ENCODE measurements at regions of chr13 and their contacts with region 1.

Region 1: DNA sequence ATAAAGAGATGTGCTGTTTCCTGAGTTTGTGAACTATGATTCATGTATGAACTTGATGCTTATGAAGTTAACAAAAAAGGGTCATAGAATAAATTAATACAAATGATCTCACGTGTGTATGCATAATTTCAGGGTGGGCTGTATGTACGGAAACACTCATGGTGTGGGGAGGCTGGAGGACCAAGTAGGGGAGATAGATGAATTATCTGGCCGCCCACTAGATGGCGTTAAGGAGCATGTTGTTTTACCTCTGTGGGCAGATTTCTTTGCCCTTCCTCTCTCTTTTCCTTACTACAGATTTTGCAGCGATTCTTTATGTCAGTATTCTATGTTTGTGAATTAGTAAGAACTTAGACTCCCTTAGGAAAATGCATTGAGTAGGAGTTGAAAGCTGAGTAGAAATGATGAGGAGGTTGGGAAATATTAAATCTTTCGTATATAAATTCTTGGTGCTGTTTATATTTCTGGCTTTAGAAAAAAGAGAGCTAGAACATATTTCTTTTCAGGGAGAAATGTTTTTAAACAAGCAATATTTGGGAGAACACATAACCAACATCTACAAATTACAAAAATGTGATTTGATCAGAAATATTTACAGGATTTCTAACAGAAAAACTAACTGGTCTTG is 47.4 kb upstream of the TMTC4 start:
- DNase-seq: peak in 7 of 9 donors; percentile 13 to 42 (median 36)
- ATAC-seq: peak; percentile 36
- H3K4me3 ChIP-seq: no peak overlapping the region
- H3K4me3 Mint-ChIP-seq: no peak overlapping the region
- H3K27ac ChIP-seq: no peak overlapping the region
- H3K27ac Mint-ChIP-seq: no peak overlapping the region
- H3K4me1 ChIP-seq: no peaks in the 10 kb centered on the region
- H3K4me1 Mint-ChIP-seq: peaks cover 0 to 6% (median 1%) of the 10 kb centered on the region in 7 donors
- H3K27me3 ChIP-seq: no peaks in the 10 kb centered on the region
- H3K27me3 Mint-ChIP-seq: peaks cover 5 to 30% (median 25%) of the 10 kb centered on the region in 5 donors

Region 2: DNA sequence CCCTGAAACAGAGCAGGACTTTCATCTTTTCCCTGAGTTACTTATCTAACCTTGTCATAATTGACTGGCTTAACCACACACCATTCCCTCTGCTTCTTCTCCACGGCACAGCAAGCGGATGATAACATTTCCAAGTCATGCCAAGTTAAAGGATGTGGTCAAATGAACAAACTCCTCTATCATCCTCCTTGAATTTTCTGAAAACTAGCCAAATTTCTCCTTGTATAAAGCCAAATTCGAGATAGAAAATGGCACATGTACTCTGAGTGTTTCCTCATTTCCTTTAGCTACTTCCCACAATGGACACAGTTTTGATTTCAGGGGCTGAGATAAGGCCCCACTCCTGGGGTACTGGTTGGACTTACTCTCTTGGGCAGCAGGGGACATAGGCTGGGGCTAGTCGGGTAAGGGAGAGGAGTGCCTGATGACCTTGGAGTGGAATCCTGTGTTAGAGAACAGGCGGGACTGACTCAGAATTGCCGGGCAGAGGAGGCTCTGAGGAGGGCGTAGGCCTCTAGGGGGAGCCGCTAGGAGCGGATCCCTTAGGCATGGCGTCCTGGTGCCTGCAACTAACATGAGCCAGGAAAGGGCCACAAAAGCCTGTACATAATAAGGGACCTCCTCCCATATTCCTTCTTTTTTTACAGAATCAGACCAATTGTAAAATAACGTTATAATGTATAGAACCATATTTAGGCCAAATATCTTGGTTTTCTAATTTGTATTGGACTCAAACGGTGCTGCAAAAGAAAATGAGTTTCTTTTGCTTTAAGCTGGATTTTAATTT is 27.1 kb before region 1 on chr13:
- CTCF ChIA-PET with region 1: no interaction called
- POLR2A ChIA-PET with region 1: no interaction called
- intact Hi-C with region 1: no loop called
- DNase-seq: no peak
- ATAC-seq: no peak
- H3K4me3 ChIP-seq: no peak overlapping the region
- H3K4me3 Mint-ChIP-seq: no peak overlapping the region
- H3K27ac ChIP-seq: no peak overlapping the region
- H3K27ac Mint-ChIP-seq: no peak overlapping the region
- H3K4me1 ChIP-seq: no peaks in the 10 kb centered on the region
- H3K4me1 Mint-ChIP-seq: no peaks in the 10 kb centered on the region
- H3K27me3 ChIP-seq: no peaks in the 10 kb centered on the region
- H3K27me3 Mint-ChIP-seq: peaks cover 10 to 37% (median 28%) of the 10 kb centered on the region in 5 donors

Region 3: GRCh38 chr13:100707818-100708740 is 13.9 kb before region 1 on chr13:
- CTCF ChIA-PET with region 1: interaction called, 3 read pairs
- POLR2A ChIA-PET with region 1: no interaction called
- intact Hi-C with region 1: loop called in 1 of 2 experiments (anchors 2 kb)
- DNase-seq: no peak
- ATAC-seq: no peak
- H3K4me3 ChIP-seq: no peak overlapping the region
- H3K4me3 Mint-ChIP-seq: no peak overlapping the region
- H3K27ac ChIP-seq: no peak overlapping the region
- H3K27ac Mint-ChIP-seq: no peak overlapping the region
- H3K4me1 ChIP-seq: no peaks in the 10 kb centered on the region
- H3K4me1 Mint-ChIP-seq: no peaks in the 10 kb centered on the region
- H3K27me3 ChIP-seq: no peaks in the 10 kb centered on the region
- H3K27me3 Mint-ChIP-seq: no peaks in the 10 kb centered on the region

Region 4: DNA sequence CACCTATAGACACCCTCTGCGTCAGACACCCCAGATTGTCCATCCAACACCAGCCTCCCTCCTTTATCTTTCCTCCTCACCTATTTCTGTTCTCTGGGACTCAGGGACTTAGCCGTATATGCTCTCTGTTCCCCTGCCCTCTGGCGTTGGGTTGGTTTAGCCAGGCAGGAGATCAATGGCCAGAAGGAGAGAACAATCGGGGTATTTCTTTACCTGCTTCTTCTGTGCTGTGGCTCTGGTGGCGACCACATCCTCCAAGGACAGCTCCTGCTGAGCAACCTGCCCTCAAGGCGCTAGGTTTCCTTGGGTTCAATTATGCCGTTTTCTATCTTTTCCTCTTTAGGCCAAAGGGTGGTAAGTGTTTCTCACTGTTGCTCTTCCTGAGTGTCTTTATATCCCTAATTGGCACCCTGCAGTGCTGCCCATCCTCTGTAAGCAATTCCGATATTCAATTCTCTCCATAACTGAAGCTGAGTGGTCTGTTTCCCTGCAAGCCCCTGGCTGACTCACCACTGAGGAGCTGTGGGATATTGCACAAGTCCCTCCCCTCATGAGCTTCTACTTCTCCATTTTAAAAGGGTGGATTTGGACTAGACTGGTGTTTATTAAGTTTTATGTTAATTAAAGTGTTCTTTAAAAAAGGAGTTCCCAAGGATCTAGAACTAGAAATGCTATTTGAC is 16.3 kb after region 1 on chr13:
- CTCF ChIA-PET with region 1: no interaction called
- POLR2A ChIA-PET with region 1: no interaction called
- intact Hi-C with region 1: no loop called
- DNase-seq: no peak
- ATAC-seq: no peak
- H3K4me3 ChIP-seq: no peak overlapping the region
- H3K4me3 Mint-ChIP-seq: no peak overlapping the region
- H3K27ac ChIP-seq: no peak overlapping the region
- H3K27ac Mint-ChIP-seq: no peak overlapping the region
- H3K4me1 ChIP-seq: no peaks in the 10 kb centered on the region
- H3K4me1 Mint-ChIP-seq: no peaks in the 10 kb centered on the region
- H3K27me3 ChIP-seq: no peaks in the 10 kb centered on the region
- H3K27me3 Mint-ChIP-seq: peaks cover 7 to 28% (median 23%) of the 10 kb centered on the region in 5 donors

Region 5: DNA sequence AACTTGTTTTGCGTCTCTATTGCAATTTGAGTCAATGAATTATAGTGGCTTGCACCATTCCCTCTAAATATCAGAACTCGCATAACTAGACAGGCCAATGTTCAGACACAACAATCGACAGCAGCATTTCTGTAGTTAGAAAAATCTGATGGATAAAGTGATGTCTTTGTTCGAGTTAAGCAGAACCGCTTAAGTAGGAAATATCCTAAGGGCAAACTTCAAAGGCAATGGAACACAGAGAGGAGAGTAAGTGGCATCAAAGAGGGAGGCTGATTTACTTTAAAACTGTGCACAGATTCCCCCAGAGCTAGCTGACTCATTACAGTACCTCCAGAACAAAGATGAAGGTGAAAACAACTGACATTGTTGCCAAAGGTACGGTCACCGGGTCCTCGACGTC is 360.5 kb after region 1 on chr13:
- CTCF ChIA-PET with region 1: no interaction called
- POLR2A ChIA-PET with region 1: no interaction called
- intact Hi-C with region 1: no loop called
- DNase-seq: no peak
- ATAC-seq: no peak
- H3K4me3 ChIP-seq: no peak overlapping the region
- H3K4me3 Mint-ChIP-seq: no peak overlapping the region
- H3K27ac ChIP-seq: no peak overlapping the region
- H3K27ac Mint-ChIP-seq: no peak overlapping the region
- H3K4me1 ChIP-seq: no peaks in the 10 kb centered on the region
- H3K4me1 Mint-ChIP-seq: no peaks in the 10 kb centered on the region
- H3K27me3 ChIP-seq: no peaks in the 10 kb centered on the region
- H3K27me3 Mint-ChIP-seq: peaks cover 0 to 27% (median 9%) of the 10 kb centered on the region in 5 donors

Region 6: GRCh38 chr13:101098873-101099272 is 376.9 kb after region 1 on chr13:
- CTCF ChIA-PET with region 1: no interaction called
- POLR2A ChIA-PET with region 1: no interaction called
- intact Hi-C with region 1: loop called in 1 of 2 experiments (anchors 1 kb)
- DNase-seq: no peak
- ATAC-seq: no peak
- H3K4me3 ChIP-seq: no peak overlapping the region
- H3K4me3 Mint-ChIP-seq: no peak overlapping the region
- H3K27ac ChIP-seq: no peak overlapping the region
- H3K27ac Mint-ChIP-seq: no peak overlapping the region
- H3K4me1 ChIP-seq: no peaks in the 10 kb centered on the region
- H3K4me1 Mint-ChIP-seq: peaks cover 0 to 3% (median 0%) of the 10 kb centered on the region in 7 donors
- H3K27me3 ChIP-seq: no peaks in the 10 kb centered on the region
- H3K27me3 Mint-ChIP-seq: peaks cover 18 to 30% (median 20%) of the 10 kb centered on the region in 5 donors

Region 7: DNA sequence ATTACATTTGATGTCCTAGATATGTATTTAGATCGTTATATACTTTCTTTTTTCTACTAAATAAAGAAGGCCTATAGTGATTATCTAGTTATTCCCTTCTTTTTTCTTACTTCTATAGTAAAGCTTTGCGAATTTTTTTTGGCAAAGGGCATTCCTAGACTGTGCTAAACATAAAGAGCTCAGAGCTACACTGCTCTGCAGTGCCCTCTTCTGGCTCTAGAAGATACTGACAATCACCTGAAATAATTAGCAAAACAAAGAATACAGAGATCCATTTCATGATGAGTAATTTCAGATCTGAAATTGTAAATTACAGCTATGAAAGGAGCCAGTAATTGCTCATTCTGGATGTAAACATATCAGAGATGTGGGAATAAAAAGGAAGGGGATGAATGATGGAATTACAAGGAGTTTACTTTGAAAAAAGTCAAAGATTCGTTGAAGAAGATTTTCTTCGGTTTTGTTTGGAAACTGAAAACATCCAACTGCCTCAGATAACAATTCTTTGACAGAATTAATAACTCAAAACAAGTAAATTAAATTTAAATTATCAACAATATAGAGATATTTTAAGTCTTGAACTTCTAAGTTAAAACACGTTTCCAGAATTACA is 405.8 kb after region 1 on chr13:
- CTCF ChIA-PET with region 1: no interaction called
- POLR2A ChIA-PET with region 1: no interaction called
- intact Hi-C with region 1: loop called in 1 of 2 experiments (anchors 1 kb)
- DNase-seq: peak in 5 of 9 donors; percentile 16 to 36 (median 29)
- ATAC-seq: peak; percentile 80
- H3K4me3 ChIP-seq: no peak overlapping the region
- H3K4me3 Mint-ChIP-seq: no peak overlapping the region
- H3K27ac ChIP-seq: no peak overlapping the region
- H3K27ac Mint-ChIP-seq: no peak overlapping the region
- H3K4me1 ChIP-seq: no peaks in the 10 kb centered on the region
- H3K4me1 Mint-ChIP-seq: peaks cover 0 to 5% (median 0%) of the 10 kb centered on the region in 7 donors
- H3K27me3 ChIP-seq: peaks cover 0 to 2% of the 10 kb centered on the region in 2 donors
- H3K27me3 Mint-ChIP-seq: peaks cover 0 to 20% (median 15%) of the 10 kb centered on the region in 5 donors

Measured in naive thymus-derived CD4-positive, alpha-beta T cell (primary cell).